PC-3 (cell line): ENCODE measurements at regions of chr5 and their contacts with region 1.

Region 1: DNA sequence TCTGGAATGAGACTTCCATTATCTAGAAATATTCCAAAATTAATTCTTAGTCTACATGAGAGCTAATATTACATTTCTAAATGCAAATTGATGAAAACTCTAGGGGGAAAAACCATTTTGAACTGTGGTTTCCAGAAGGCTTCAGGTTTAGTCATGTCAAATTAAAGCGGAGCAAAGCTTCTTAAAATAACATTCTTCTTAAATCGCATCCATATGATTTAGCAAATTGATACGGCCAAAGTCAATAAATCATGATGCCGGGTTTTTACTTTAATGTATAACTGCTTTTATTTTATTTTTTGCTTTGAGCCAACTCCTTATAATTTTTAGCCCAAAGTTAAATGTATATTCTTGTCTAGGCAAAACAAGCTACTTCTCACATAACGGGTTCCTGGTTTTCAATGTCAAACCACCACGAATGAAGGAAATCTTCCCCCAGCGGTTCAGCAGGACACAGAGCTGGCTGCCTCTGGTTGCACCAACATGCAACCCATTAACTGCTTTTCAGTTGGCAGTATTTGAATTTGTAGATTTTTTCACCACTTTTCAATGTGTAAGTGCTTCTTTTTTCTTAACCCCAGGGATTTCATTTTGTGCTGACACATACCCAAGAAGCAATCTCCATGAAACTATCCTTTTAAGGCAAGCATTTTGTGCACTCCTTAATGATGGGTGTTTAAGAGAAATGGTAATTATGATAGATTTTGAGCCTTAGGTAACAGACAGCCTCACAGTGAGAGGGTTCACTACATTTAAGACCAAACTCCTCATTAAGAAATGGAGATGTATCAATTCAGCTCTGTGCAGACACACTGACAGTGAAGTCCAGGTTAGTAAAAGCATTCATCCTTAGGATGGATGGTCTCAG is 35.5 kb downstream of the EFNA5 start:
- DNase-seq: no peak
- ATAC-seq: no peak
- H3K4me3 ChIP-seq: no peak overlapping the region
- H3K27ac ChIP-seq: no peak overlapping the region
- H3K4me1 ChIP-seq: peaks cover 8% of the 10 kb centered on the region; the same call in 1 of the 2 replicates
- H3K27me3 ChIP-seq: no peaks in the 10 kb centered on the region
- CTCF ChIP-seq: no peak

Region 2: GRCh38 chr5:106843812-106844416 is 791.3 kb before region 1 on chr5:
- CTCF ChIA-PET with region 1: no interaction called
- POLR2A ChIA-PET with region 1: no interaction called
- intact Hi-C with region 1: no loop called
- DNase-seq: peak; percentile 71
- ATAC-seq: peak; percentile 87
- H3K4me3 ChIP-seq: no peak overlapping the region
- H3K27ac ChIP-seq: no peak overlapping the region
- H3K4me1 ChIP-seq: no peaks in the 10 kb centered on the region
- H3K27me3 ChIP-seq: no peaks in the 10 kb centered on the region
- CTCF ChIP-seq: peak; percentile 60

Region 3: GRCh38 chr5:107300721-107301327 is 334.4 kb before region 1 on chr5:
- CTCF ChIA-PET with region 1: no interaction called
- POLR2A ChIA-PET with region 1: no interaction called
- intact Hi-C with region 1: no loop called
- DNase-seq: peak; percentile 24
- ATAC-seq: peak; percentile 31; the same call in 1 of the 2 replicates
- H3K4me3 ChIP-seq: no peak overlapping the region
- H3K27ac ChIP-seq: 0 out of 2 replicates have a peak overlapping the region, but pooled peaks have one; percentile 19
- H3K4me1 ChIP-seq: peaks cover 31% of the 10 kb centered on the region
- H3K27me3 ChIP-seq: no peaks in the 10 kb centered on the region
- CTCF ChIP-seq: no peak

Region 4: DNA sequence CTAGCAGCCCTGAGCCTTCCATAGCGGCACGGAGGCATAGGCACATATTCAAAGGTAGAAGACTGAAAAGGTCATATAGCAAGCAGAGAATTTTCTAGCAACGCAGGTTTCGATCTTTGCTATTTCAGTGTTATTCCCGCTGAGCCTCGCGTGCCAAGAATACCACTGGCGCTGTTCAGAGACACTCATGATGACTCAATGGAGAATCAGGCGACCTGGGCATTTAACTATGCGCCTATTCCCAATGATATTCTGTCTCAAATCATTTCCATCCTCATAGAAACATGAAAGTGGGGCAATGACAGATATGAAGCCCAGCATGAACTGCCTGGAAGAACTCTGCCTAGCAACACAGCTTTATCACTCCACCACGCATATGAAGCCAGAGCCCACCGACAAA is 24.4 kb before region 1 on chr5:
- CTCF ChIA-PET with region 1: no interaction called
- POLR2A ChIA-PET with region 1: no interaction called
- intact Hi-C with region 1: loop called (anchors 1 kb)
- DNase-seq: no peak
- ATAC-seq: no peak
- H3K4me3 ChIP-seq: no peak overlapping the region
- H3K27ac ChIP-seq: no peak overlapping the region
- H3K4me1 ChIP-seq: peaks cover 7% of the 10 kb centered on the region; the same call in 1 of the 2 replicates
- H3K27me3 ChIP-seq: no peaks in the 10 kb centered on the region
- CTCF ChIP-seq: no peak

Region 5: DNA sequence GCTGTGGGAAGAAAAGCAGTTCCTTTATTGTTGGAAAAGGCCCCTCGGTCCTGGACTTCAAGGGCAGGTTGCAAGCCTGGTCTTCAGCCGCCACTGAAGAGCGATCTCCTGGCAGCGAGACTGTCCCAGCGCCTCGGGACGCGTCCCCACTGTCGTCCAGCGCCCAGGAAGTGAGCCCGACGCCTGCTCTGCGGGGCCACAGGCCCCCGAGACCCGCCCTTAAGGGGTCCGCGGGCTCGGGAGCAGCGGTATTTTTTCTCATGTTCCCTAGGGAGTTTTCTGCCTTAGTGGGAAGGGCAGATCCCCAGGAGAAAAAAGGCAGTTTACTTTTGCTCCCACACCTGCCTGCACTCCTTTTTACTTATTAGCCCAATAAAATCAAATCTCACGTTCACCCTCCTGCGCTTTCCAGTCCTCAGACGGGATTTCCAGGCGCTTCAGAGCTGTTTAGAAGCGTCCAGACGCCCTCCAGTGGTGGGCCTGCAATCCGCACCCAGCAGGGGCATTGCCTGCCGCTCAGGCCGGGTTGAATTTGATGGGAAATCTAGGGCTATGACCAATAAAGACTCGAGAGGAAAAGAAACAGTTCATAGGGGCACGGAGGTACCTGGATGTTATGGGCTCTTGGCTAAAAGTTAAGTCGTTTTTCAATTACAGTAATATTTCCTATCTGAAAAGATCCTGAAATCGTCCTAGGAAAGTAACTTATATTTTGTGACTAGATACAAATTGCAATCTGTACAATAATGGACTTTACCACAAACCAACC is 38.3 kb after region 1 on chr5:
- CTCF ChIA-PET with region 1: no interaction called
- POLR2A ChIA-PET with region 1: no interaction called
- intact Hi-C with region 1: no loop called
- DNase-seq: peak; percentile 98
- ATAC-seq: peak; percentile 45
- H3K4me3 ChIP-seq: peak overlapping the region; percentile 83
- H3K27ac ChIP-seq: peak overlapping the region; percentile 69
- H3K4me1 ChIP-seq: peaks cover 24% of the 10 kb centered on the region
- H3K27me3 ChIP-seq: peaks cover 12% of the 10 kb centered on the region; the same call in 1 of the 2 replicates
- CTCF ChIP-seq: peak; percentile 99